CD4-positive, alpha-beta memory T cell (primary cell): ENCODE measurements at regions of chr1 and their contacts with region 1.

Region 1: GRCh38 chr1:176073524-176074157 is 133.4 kb downstream of the COP1 start:
- DNase-seq: peak in 4 of 5 donors; percentile 26 to 34 (median 31)
- H3K4me3 ChIP-seq: no peak overlapping the region
- H3K4me3 Mint-ChIP-seq: no peak overlapping the region
- H3K27ac ChIP-seq: no peak overlapping the region
- H3K27ac Mint-ChIP-seq: peak overlapping the region in 2 of 7 donors; percentile 1 to 22
- H3K4me1 ChIP-seq: no peaks in the 10 kb centered on the region
- H3K4me1 Mint-ChIP-seq: peaks cover 0 to 15% (median 12%) of the 10 kb centered on the region in 4 donors
- H3K27me3 ChIP-seq: no peaks in the 10 kb centered on the region
- H3K27me3 Mint-ChIP-seq: no peaks in the 10 kb centered on the region

Region 2: GRCh38 chr1:175373786-175374623 is 699.6 kb before region 1 on chr1:
- CTCF ChIA-PET with region 1: no interaction called
- POLR2A ChIA-PET with region 1: no interaction called
- intact Hi-C with region 1: loop called (anchors 10 kb)
- DNase-seq: no peak
- H3K4me3 ChIP-seq: no peak overlapping the region
- H3K4me3 Mint-ChIP-seq: no peak overlapping the region
- H3K27ac ChIP-seq: no peak overlapping the region
- H3K27ac Mint-ChIP-seq: no peak overlapping the region
- H3K4me1 ChIP-seq: no peaks in the 10 kb centered on the region
- H3K4me1 Mint-ChIP-seq: no peaks in the 10 kb centered on the region
- H3K27me3 ChIP-seq: no peaks in the 10 kb centered on the region
- H3K27me3 Mint-ChIP-seq: peaks cover 2 to 6% of the 10 kb centered on the region in 2 donors

Region 3: DNA sequence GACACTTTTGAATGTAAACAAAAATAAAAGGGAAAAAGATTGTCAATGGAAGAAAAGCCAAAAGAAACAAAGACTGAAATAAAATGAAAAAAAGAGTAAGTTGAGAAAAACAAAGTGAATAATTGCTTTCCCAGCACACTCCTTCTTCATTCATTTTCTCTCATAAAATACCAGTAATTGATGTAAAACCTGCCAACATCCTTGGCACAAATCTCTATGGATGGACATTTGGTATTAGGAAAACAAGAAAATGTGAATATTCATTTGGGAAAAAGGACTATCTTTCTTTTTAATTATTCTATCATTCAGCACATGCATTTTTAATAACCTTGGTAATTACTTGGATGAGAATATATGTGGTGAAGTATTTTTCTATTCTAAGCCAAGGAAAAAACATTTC is 125.9 kb before region 1 on chr1:
- CTCF ChIA-PET with region 1: no interaction called
- POLR2A ChIA-PET with region 1: no interaction called
- intact Hi-C with region 1: no loop called
- DNase-seq: no peak
- H3K4me3 ChIP-seq: no peak overlapping the region
- H3K4me3 Mint-ChIP-seq: no peak overlapping the region
- H3K27ac ChIP-seq: no peak overlapping the region
- H3K27ac Mint-ChIP-seq: no peak overlapping the region
- H3K4me1 ChIP-seq: no peaks in the 10 kb centered on the region
- H3K4me1 Mint-ChIP-seq: peaks cover 0 to 3% (median 0%) of the 10 kb centered on the region in 4 donors
- H3K27me3 ChIP-seq: no peaks in the 10 kb centered on the region
- H3K27me3 Mint-ChIP-seq: no peaks in the 10 kb centered on the region

Region 4: GRCh38 chr1:176271572-176271971 is 197.9 kb after region 1 on chr1:
- CTCF ChIA-PET with region 1: no interaction called
- POLR2A ChIA-PET with region 1: no interaction called
- intact Hi-C with region 1: no loop called
- DNase-seq: no peak
- H3K4me3 ChIP-seq: no peak overlapping the region
- H3K4me3 Mint-ChIP-seq: no peak overlapping the region
- H3K27ac ChIP-seq: no peak overlapping the region
- H3K27ac Mint-ChIP-seq: peak overlapping the region in 1 of 7 donors; percentile 57
- H3K4me1 ChIP-seq: no peaks in the 10 kb centered on the region
- H3K4me1 Mint-ChIP-seq: no peaks in the 10 kb centered on the region
- H3K27me3 ChIP-seq: no peaks in the 10 kb centered on the region
- H3K27me3 Mint-ChIP-seq: peaks cover 0 to 1% of the 10 kb centered on the region in 2 donors